A673 (cell line): ENCODE measurements at regions of chr20 and their contacts with region 1.

Region 1: DNA sequence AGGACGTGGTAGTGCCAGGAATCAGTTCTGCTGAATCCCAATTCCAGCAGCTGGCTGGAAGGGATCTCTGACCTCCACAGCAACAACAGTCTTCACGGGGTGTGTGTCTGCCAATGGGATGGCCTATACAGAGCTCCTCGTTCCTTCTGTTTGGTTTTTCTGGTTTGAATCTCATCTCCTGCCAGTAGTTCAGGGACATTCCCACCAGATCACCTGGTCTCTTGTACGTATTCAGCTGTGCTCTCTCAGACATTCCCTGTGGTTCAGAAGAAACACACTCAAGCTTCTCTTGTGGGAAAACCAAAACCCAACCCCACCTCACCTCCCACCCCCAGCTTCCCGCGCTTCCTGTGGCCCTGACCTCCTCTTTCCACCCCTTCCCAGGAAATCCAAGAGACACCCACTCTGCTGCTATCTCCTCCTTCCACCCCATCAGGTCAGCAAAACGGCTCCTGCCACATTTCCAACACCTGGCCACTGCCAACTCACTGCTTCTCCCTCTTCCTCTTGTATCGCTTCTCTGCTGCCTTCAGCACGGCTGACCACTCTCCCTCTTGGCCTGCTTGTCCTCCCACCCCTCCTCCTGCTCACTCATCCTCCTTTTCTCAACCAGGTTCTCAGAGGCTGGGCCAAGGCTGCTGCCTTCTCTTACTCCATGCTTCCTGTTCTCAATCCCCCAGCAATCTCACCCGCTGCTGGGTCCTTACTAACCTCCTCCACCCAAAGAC is 63.3 kb upstream of the PTGIS start:
- DNase-seq: no peak
- H3K4me3 ChIP-seq: no peak overlapping the region
- H3K27ac ChIP-seq: no peak overlapping the region
- H3K4me1 ChIP-seq: no peaks in the 10 kb centered on the region
- H3K27me3 ChIP-seq: no peaks in the 10 kb centered on the region
- CTCF ChIP-seq: no peak

Region 2: DNA sequence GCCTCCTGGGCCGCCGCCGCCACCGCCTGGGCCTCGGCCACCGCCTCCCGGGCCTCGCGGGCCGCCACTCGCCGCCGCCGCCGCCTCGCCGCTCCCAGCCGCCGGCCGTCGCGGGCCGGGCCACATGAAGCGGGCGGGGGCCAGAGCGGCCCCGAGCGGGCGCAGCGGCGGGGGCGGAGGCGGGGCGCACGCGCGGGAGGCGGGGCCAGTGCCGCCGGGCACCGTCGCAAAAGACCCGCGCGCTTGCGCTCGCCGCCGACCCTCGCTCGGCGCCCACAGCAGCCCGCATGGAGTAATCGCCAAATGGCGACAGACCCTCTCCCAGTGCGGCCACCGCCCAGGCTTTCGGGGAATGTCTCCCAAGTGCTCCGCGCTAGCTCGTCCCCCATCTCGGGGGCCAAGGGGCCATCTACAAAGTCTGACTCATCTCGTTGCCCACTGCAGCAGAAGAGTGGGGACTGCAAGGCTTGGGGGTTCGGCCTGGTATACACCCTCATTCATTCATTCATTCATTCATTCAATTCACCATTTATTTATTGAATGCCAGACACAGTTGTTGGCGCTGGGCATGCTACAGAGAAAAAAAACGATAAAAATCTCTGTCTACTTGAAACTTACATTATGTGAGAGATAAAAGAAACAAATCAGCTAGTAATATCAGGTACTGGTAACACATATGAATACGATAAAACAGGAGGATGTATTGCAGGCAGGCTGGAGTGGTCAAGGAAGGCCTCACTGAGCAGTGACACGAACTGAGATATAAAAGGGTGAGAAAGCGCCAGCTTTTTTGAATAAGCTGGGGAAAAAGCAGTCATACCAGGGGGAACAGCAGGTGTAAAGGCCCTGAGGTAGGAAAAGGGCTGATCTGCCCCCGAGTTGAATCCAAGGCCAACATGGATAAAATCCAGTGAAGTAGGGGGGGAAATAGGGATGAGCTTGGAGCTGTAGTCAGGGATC is 82.8 kb after region 1 on chr20 and contains the start of gene B4GALT5:
- CTCF ChIA-PET with region 1: no interaction called
- POLR2A ChIA-PET with region 1: no interaction called
- intact Hi-C with region 1: loop called (anchors 10 kb)
- DNase-seq: peak; percentile 93
- H3K4me3 ChIP-seq: peak within 1 kb of the TSS; percentile 92
- H3K27ac ChIP-seq: peak within 1 kb of the TSS; percentile 92
- H3K4me1 ChIP-seq: peaks cover 18% of the 10 kb centered on the region
- H3K27me3 ChIP-seq: no peaks in the 10 kb centered on the region
- CTCF ChIP-seq: no peak
- total RNA-seq, gene B4GALT5: 60.7 and 78.0 TPM in 2 replicates